ENCODE measurements at regions of chr12 and their contacts with region 1.

Region 1: GRCh38 chr12:3872800-3873636 is at the start of gene PARP11:
- DNase-seq: peak; percentile 99
- H3K4me3 Mint-ChIP-seq: peak within 1 kb of the TSS; percentile 87
- H3K27ac Mint-ChIP-seq: peak within 1 kb of the TSS; percentile 96
- H3K4me1 Mint-ChIP-seq: peaks cover 38% of the 10 kb centered on the region
- H3K27me3 Mint-ChIP-seq: no peaks in the 10 kb centered on the region
- total RNA-seq, gene PARP11: 19.9 to 20.7 TPM

Region 2: DNA sequence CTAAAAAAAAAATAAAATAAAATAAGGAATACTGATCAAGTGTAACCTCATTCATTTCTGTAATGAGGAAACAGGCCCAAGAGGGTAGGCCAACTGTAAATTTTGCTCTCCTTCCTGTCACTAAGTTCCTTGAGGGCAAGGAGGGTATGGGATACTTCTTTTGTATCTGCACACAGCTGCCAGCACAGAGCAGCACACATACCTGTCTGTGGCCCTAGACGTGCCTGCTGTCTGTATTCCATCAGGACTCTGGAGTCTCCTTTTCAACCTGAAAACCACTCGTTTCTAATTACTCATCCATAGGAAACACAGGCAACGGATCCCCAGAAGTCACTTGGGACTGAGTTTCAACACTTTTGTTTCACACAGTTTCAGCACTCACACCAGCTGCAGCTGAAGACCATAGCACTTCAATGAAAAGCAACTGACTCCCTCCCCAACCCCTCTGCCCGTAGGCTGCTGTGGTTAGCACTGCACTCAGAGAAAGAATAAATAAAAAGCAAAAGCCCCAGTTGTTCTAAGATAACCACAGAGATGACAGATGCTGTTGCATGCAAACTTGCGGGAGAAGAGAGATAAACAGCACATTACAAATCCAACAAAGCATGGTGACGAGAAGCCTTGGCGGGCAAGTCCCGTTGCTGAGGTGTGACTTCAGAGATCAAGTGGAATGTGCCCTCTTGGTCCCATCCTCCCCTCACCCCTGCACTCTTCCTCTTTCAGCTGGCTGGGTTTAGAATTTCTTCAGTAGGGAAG is 145.0 kb before region 1 on chr12:
- CTCF ChIA-PET with region 1: no interaction called
- intact Hi-C with region 1: loop called (anchors 2 kb)
- DNase-seq: peak; percentile 77
- H3K4me3 Mint-ChIP-seq: peak overlapping the region; percentile 38
- H3K27ac Mint-ChIP-seq: peak overlapping the region; percentile 84
- H3K4me1 Mint-ChIP-seq: peaks cover 37% of the 10 kb centered on the region
- H3K27me3 Mint-ChIP-seq: no peaks in the 10 kb centered on the region

Region 3: DNA sequence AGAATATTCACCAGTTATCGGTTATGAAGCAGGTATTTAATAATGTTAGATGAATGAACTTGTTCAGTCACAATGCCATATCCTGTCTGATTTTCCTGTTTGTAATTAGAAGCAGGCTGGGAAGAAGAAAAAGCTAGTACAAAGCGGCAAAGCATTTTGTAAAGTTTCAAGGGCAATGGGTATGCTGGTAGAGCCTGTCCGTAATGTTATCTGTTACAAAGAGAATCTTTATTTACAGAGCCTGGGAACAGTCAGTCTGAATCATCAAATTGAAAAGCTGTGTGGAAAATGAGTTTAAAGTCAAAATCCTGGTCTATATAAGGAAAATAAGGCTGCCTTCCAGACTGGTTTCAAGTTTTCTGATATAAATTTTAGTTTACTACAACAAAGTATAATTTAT is 40.3 kb before region 1 on chr12:
- CTCF ChIA-PET with region 1: no interaction called
- intact Hi-C with region 1: loop called (anchors 2 kb)
- DNase-seq: no peak
- H3K4me3 Mint-ChIP-seq: no peak overlapping the region
- H3K27ac Mint-ChIP-seq: no peak overlapping the region
- H3K4me1 Mint-ChIP-seq: peaks cover 41% of the 10 kb centered on the region
- H3K27me3 Mint-ChIP-seq: no peaks in the 10 kb centered on the region

Region 4: DNA sequence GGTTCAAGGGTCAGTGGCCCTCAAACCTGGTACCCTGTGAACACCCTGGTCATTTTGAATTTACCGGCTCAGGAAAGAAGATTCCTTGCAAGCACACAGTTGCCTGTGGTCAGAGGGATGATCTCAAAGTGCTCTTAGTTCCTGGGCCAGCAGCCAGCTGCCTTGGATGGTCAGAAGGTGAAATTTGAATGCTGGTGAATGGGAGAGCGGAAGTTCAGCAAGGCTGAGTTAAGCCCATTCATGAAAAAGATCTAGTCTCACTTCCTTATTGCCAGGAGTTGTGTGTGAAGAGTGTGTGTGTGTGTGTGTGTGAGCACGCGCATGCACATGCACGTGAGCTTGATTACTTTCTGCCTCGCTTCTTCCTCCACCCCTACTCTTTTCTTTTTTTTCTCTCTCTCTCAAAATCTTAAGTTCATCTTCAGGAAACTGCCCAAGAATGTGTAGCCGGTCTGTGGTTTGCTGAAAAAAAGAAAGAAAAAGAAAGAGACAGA is 245.0 kb after region 1 on chr12:
- CTCF ChIA-PET with region 1: no interaction called
- intact Hi-C with region 1: loop called (anchors 1 kb)
- DNase-seq: no peak
- H3K4me3 Mint-ChIP-seq: peak overlapping the region; percentile 58
- H3K27ac Mint-ChIP-seq: peak overlapping the region; percentile 96
- H3K4me1 Mint-ChIP-seq: peaks cover 61% of the 10 kb centered on the region
- H3K27me3 Mint-ChIP-seq: no peaks in the 10 kb centered on the region

Region 5: DNA sequence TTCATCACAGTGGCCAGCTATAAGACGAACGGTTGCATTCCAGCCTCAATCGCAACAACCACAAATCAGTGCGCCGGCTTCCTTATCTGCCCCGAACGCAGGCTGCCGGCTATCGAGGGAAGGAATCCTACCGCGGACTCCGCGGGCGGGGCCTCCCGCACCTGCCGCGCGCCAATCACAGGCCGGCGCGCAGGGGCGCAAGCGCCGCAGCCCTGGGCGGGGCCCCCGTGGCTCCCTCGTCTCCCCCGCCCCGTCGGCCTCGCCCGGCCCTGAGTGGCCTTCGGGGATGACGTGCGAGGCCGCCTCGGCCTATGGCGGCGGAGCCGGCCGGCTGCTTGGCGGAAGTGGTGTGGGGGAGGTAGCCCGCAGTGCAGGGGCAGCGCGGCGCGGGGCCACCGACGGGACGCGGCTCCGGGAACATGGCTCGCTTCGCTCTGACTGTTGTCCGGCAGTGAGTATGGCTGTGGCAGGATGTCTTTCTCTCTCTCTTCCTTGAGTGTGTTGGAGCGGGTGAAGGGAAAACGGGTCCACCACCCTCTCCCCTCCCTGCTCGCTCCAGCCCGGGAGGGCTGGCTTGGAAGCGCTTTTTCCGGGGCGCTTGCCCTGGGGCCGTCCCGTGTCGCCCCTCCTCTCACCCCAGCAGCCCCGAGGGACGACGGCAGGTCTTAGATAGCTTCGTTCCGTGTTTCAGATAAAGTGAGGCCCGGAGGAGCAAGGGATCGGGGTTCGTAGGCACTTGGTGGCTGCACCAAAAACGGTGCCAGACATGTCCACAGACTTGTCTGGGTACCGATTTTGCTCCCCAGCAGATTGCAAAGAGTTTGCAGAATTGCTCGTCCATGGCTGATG is 448.1 kb after region 1 on chr12 and contains the start of gene TIGAR:
- CTCF ChIA-PET with region 1: no interaction called
- intact Hi-C with region 1: loop called (anchors 1 kb)
- DNase-seq: peak; percentile 91
- H3K4me3 Mint-ChIP-seq: peak within 1 kb of the TSS; percentile 83
- H3K27ac Mint-ChIP-seq: peak within 1 kb of the TSS; percentile 87
- H3K4me1 Mint-ChIP-seq: peaks cover 34% of the 10 kb centered on the region
- H3K27me3 Mint-ChIP-seq: no peaks in the 10 kb centered on the region
- total RNA-seq, gene TIGAR: 10.3 to 12.8 TPM

Region 6: DNA sequence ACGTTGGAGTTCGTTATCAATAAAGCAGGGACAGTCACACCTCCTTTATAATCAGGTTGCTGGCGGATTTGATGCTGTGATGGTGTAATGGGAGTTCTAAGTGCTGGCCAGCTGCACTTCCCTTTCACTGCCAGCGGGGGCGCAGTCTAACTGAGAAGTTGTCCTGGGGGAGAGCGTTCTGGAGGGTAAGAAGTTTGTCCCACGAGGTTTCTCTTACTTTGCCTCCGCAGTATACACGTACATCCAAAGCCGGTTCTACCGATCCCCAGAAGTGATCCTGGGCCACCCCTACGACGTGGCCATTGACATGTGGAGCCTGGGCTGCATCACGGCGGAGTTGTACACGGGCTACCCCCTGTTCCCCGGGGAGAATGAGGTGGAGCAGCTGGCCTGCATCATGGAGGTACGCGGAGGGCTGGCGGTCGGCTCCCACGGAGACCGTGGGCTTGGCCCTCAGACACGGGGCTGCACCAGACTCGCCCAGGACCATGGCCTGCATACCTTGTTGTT is 731.7 kb after region 1 on chr12:
- CTCF ChIA-PET with region 1: no interaction called
- intact Hi-C with region 1: loop called (anchors 2 kb)
- DNase-seq: peak; percentile 92
- H3K4me3 Mint-ChIP-seq: peak overlapping the region; percentile 91
- H3K27ac Mint-ChIP-seq: peak overlapping the region; percentile 81
- H3K4me1 Mint-ChIP-seq: peaks cover 18% of the 10 kb centered on the region
- H3K27me3 Mint-ChIP-seq: peaks cover 8% of the 10 kb centered on the region